Activated B cell treated with CpG ODN at 0.5 μM for 24 hours (primary cell): ENCODE measurements at regions of chr7 and their contacts with region 1.

Region 1: GRCh38 chr7:129210256-129210988 is 14.4 kb upstream of the AHCYL2 start:
- DNase-seq: peak; percentile 77
- ATAC-seq: peak; percentile 91
- H3K4me3 Mint-ChIP-seq: no peak overlapping the region
- H3K27ac Mint-ChIP-seq: no peak overlapping the region
- H3K4me1 Mint-ChIP-seq: peaks cover 5% of the 10 kb centered on the region
- H3K27me3 Mint-ChIP-seq: no peaks in the 10 kb centered on the region
- CTCF ChIP-seq: peak; percentile 66

Region 2: GRCh38 chr7:128841921-128842651 is 368.3 kb before region 1 on chr7:
- CTCF ChIA-PET with region 1: interaction called, 3 read pairs
- POLR2A ChIA-PET with region 1: no interaction called
- intact Hi-C with region 1: loop called (anchors 5 kb)
- DNase-seq: peak; percentile 49
- ATAC-seq: peak; percentile 67
- H3K4me3 Mint-ChIP-seq: no peak overlapping the region
- H3K27ac Mint-ChIP-seq: no peak overlapping the region
- H3K4me1 Mint-ChIP-seq: peaks cover 4% of the 10 kb centered on the region
- H3K27me3 Mint-ChIP-seq: peaks cover 2% of the 10 kb centered on the region
- CTCF ChIP-seq: peak; percentile 29

Region 3: DNA sequence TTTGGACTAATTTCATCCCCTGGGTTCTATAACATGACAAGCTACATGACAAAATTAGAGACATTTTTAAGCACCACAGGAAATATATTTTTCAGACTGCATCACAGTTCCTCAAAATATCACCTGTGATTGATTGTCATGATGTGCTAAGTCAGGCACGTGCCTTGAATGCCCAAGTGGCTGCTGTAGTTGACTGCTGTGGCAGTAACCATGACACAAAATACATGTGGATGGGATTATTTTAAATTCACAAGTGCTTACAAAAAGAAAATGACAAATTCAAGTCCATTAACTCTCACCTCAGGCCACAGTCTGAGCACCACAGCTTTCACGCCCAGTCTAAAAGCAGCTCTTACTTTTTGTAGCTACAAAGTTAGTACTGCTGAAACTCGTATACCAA is 201.0 kb before region 1 on chr7:
- CTCF ChIA-PET with region 1: no interaction called
- POLR2A ChIA-PET with region 1: no interaction called
- intact Hi-C with region 1: loop called (anchors 1 kb)
- DNase-seq: no peak
- ATAC-seq: peak; percentile 86
- H3K4me3 Mint-ChIP-seq: peak overlapping the region; percentile 17
- H3K27ac Mint-ChIP-seq: peak overlapping the region; percentile 82
- H3K4me1 Mint-ChIP-seq: peaks cover 43% of the 10 kb centered on the region
- H3K27me3 Mint-ChIP-seq: no peaks in the 10 kb centered on the region
- CTCF ChIP-seq: no peak

Region 4: DNA sequence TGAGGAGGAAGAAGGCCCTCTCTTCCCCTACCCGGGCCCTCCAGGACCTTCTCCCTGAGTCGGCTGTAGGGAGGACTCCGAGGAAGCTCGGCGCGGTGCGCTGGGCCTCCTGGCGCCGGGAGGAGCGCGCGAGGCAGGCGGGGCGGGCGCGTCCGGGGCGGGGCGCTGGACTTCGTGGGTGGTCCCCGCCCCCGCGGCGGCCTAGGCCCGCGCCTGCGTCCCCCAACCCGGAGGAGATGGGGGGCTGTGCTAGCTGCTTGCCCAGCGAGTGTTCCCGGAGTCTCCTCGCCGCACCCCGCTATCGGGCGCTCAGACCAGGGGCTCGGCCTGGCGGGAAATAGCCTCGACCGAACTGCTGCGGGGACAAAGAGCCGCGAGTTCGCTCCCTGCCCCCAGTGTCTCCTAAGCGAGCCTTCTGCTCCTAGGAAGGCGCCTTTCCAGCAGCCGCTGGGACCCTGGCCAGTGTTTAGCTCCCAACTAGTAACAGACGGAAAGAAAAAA is 41.2 kb before region 1 on chr7:
- CTCF ChIA-PET with region 1: interaction called, 27 read pairs
- POLR2A ChIA-PET with region 1: interaction called, 4 read pairs
- intact Hi-C with region 1: loop called (anchors 1 kb)
- DNase-seq: peak; percentile 60
- ATAC-seq: peak; percentile 63
- H3K4me3 Mint-ChIP-seq: peak overlapping the region; percentile 83
- H3K27ac Mint-ChIP-seq: peak overlapping the region; percentile 88
- H3K4me1 Mint-ChIP-seq: peaks cover 63% of the 10 kb centered on the region
- H3K27me3 Mint-ChIP-seq: no peaks in the 10 kb centered on the region
- CTCF ChIP-seq: no peak

Region 5: GRCh38 chr7:129298268-129298893 is 88.0 kb after region 1 on chr7:
- CTCF ChIA-PET with region 1: interaction called, 12 read pairs
- POLR2A ChIA-PET with region 1: no interaction called
- intact Hi-C with region 1: no loop called
- DNase-seq: no peak
- ATAC-seq: no peak
- H3K4me3 Mint-ChIP-seq: no peak overlapping the region
- H3K27ac Mint-ChIP-seq: no peak overlapping the region
- H3K4me1 Mint-ChIP-seq: no peaks in the 10 kb centered on the region
- H3K27me3 Mint-ChIP-seq: no peaks in the 10 kb centered on the region
- CTCF ChIP-seq: peak; percentile 64